Activated T-helper 2 cell treated with anti-CD3 and anti-CD28 coated beads, Interferon-gamma antibody, Interleukin-2, Interleukin-4, amounts not matched to agents 10 μg/mL and 5 μg/mL and 100 μg/mL, durations not matched to agents 14 hours and 24 hours and 36 hours (primary cell): ENCODE measurements at regions of chr11 and their contacts with region 1.

Region 1: GRCh38 chr11:69443138-69443967 is 38.1 kb upstream of the LINC01488 start:
- DNase-seq: peak; percentile 71
- H3K4me3 Mint-ChIP-seq: peak overlapping the region; percentile 59
- H3K27ac Mint-ChIP-seq: peak overlapping the region; percentile 78
- H3K4me1 Mint-ChIP-seq: peaks cover 17% of the 10 kb centered on the region
- H3K27me3 Mint-ChIP-seq: peaks cover 11% of the 10 kb centered on the region

Region 2: DNA sequence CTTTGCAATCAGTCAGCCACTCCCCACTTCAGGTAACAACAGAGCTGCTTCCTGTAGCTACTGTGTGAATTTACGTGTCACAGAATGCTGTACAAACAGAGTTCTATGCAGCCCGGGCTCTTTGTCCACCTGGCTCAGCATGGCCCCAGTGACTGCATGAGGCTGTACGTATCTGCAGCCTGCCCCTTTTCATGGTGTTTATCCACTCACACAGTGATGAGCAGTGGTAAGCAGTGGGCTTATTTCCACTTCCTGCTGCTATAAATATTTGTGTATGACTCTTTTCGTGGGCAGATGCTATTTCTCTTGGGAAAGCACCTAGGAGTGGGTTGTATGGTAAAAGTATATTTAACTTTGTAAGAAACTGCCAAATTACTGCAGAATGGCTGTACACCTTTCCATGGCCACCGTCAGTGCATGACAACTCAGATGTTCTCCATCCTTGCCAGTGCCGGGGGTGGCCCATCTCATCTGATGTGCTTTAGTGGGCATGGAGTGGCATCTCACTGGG is 106.1 kb before region 1 on chr11:
- intact Hi-C with region 1: loop called (anchors 1 kb)
- DNase-seq: peak; percentile 9
- H3K4me3 Mint-ChIP-seq: no peak overlapping the region
- H3K27ac Mint-ChIP-seq: peak overlapping the region; percentile 79
- H3K4me1 Mint-ChIP-seq: peaks cover 29% of the 10 kb centered on the region
- H3K27me3 Mint-ChIP-seq: peaks cover 8% of the 10 kb centered on the region

Region 3: DNA sequence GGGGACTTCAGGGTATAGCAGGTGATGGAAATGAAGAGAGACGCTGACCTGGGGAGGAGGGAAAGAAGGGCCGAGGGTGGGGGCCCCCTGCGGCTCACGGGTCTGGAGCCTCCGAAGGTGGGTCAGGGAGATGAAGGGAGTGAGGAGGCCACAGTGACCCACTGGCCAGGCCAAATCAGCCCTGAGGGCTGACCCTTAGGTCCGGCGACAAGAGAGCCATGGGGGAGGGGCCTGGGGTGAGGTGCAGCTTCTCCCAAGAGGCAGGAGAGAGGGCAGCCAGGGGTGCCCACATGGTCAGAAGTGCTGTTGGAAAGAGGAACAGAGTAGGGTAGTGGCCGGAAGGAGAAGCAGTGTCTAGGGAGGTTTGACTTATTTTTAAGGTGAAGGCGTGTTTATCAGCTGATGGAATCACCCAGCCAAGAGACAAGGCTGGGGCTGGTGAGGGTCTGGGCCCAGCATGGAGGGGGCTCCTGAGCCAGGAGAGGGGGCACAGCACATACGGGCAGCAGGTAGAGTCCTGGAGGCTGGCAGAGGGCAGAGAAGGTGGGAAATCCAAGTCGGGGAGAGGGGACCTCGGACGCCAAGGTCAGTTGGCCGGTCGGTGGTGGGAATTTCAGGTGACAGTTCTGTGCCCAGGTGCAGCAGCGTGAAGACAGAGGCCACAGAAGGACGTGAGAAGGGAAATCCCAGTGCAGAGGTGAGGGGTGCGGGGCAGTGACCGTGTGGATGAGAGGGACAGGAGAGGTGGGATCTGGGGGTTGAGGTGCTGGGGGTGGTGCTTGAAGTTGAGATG is 87.1 kb after region 1 on chr11:
- intact Hi-C with region 1: no loop called
- DNase-seq: no peak
- H3K4me3 Mint-ChIP-seq: no peak overlapping the region
- H3K27ac Mint-ChIP-seq: no peak overlapping the region
- H3K4me1 Mint-ChIP-seq: no peaks in the 10 kb centered on the region
- H3K27me3 Mint-ChIP-seq: peaks cover 7% of the 10 kb centered on the region